ENCODE measurements at regions of chr2 and their contacts with region 1.

Region 1: DNA sequence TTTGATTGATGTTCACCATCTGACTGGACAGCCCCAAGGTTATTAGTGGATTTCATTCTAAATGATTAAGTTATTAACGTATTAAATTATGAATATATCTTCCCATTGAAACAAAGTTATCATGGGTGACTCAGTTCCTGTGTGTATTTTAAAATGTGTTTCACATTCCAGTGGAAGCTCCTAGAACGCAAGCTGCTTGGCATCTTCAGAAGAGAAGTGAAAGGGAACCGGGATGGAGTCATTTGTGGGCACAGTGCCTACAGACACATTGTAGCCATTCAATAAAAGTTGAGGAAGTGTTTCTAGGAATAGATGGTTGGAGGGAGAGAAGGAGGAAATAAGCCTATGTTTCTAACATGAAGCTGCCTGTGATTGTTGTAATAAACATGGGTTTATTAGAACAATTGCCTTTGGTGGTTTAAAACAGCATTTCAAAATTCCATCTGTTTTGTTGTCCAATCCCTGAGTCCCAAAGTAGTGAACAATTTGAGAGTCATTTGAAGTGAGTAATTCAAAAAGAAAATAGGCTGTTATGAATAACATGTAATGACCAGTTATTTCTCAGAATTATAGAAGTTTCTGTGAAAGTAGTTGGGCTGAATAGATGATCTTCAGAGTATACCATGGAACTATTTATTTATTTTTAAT is 143.5 kb downstream of the PKP4 start:
- DNase-seq: peak in 4 of 5 donors; percentile 62 to 66 (median 62)
- ATAC-seq: peak; percentile 21 to 95 (median 84)
- H3K4me3 ChIP-seq: no peak overlapping the region
- H3K27ac ChIP-seq: peak overlapping the region in 4 of 12 donors; percentile 0 to 53 (median 6)
- H3K4me1 ChIP-seq: peaks cover 0 to 28% (median 15%) of the 10 kb centered on the region in 12 donors
- H3K27me3 ChIP-seq: no peaks in the 10 kb centered on the region
- CTCF ChIP-seq: no peak
- POLR2A ChIP-seq: no peak

Region 2: DNA sequence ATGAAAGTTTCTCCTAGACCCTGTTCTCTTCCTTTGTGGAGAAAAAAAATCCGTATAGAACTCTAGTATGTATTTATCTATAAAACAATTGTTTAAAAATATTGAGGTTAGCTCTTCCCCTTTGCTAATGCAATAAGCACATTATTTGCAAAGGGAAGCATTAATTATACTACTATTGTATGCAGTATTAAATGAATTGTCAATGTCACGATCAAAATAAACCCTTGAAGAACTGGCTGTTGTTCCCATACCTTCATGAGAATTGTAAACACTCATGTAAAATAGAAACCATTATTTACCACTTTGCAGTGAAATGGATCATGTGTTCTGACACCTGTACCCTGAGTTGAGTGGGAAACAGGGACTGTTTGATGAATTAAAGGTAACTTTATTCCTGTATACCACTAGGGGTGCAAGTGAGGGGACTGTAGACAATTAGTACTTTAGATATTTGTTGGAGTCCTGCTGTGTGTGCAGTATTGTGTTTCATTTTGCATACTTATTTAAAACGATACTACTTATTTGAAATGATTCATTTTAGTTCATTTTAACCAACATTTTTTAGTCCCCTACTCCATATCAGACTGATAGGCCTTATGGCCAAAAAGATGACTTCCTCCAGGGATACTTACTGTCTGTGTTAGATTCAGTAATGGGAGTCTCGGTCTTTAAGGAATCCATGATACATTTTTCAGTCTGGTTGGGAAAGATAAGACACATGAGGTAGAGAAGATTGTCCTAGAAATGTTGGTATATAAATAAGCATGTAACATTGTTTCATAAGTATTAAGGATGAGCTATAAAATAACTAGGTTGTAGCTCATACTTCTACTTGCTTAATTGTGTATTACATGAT is 135.6 kb before region 1 on chr2:
- intact Hi-C with region 1: loop called in 2 of 10 experiments (anchors 5 to 10 kb)
- DNase-seq: no peak
- ATAC-seq: peak in 1 of 4 donors; percentile 57
- H3K4me3 ChIP-seq: no peak overlapping the region
- H3K27ac ChIP-seq: no peak overlapping the region
- H3K4me1 ChIP-seq: peaks cover 0 to 31% (median 10%) of the 10 kb centered on the region in 12 donors
- H3K27me3 ChIP-seq: no peaks in the 10 kb centered on the region
- CTCF ChIP-seq: peak in 11 of 12 donors; percentile 17 to 56 (median 43)
- POLR2A ChIP-seq: no peak

Region 3: DNA sequence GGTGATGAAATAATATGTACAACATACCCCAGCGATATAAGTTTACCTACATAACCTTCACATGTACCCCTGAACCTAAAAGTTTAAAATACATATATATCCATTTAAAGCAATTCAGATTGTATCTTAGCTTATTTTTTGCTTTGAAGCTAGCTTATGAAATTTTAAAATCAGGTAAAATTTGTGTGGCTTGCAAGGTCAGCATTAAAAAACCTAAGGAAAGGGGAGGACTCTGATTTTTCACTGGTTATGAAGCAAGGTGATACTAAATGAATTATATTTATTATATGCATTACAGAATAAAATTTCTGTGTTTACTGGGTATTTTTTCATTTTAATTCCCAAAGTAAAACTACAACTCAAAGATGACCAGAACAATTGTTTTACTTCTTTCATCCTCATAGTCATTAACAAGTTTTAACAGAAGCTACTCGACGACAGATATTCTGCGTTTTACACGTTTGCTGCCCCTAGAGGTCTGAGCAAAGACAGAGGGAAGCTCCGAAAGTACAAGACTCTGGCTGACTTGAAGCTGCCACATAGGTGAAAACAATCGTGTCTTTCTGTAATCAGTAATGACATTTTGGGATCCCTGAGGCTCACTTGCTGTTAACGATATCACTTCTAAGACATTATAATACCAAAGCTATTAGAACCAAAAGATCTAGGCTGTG is 126.4 kb before region 1 on chr2:
- intact Hi-C with region 1: loop called in 2 of 10 experiments (anchors 10 kb)
- DNase-seq: no peak
- ATAC-seq: no peak
- H3K4me3 ChIP-seq: no peak overlapping the region
- H3K27ac ChIP-seq: no peak overlapping the region
- H3K4me1 ChIP-seq: peaks cover 3 to 35% (median 21%) of the 10 kb centered on the region in 12 donors
- H3K27me3 ChIP-seq: no peaks in the 10 kb centered on the region
- CTCF ChIP-seq: no peak
- POLR2A ChIP-seq: no peak

Region 4: DNA sequence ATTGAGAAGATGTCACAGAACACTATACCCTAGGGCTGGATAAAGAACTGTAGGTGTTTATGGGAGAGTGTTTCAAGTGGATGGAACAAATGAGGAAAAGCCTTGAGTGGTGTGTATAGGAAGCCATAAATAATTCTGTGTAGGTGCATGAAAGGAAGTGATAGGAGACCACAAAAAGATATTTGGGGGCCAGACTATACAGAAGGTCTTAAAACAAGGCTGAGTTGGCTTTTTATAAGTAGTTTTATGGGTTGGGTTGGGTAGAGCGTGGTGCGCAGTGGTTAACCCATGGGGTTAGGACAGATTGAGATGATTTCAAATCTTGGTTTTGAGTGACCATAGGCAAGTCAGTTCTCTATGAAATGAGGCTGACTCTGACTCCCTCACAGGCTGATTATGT is 33.1 kb before region 1 on chr2:
- intact Hi-C with region 1: no loop called
- DNase-seq: no peak
- ATAC-seq: no peak
- H3K4me3 ChIP-seq: no peak overlapping the region
- H3K27ac ChIP-seq: no peak overlapping the region
- H3K4me1 ChIP-seq: no peaks in the 10 kb centered on the region
- H3K27me3 ChIP-seq: no peaks in the 10 kb centered on the region
- CTCF ChIP-seq: no peak
- POLR2A ChIP-seq: no peak

Measured in heart left ventricle (tissue), 16 donors.